ENCODE measurements at regions of chr19 and their contacts with region 1.

Region 1: GRCh38 chr19:14073261-14073924 is 807 bp downstream of the MISP3 start:
- DNase-seq: peak; percentile 93
- ATAC-seq: peak; percentile 77
- H3K4me3 Mint-ChIP-seq: peak overlapping the region; percentile 96
- H3K27ac Mint-ChIP-seq: peak overlapping the region; percentile 81
- H3K4me1 Mint-ChIP-seq: peaks cover 14% of the 10 kb centered on the region
- H3K27me3 Mint-ChIP-seq: peaks cover 6% of the 10 kb centered on the region

Region 2: GRCh38 chr19:13880059-13881043 is 193.0 kb before region 1 on chr19:
- POLR2A ChIA-PET with region 1: interaction called, 19 read pairs
- DNase-seq: peak; percentile 100
- ATAC-seq: peak; percentile 93
- H3K4me3 Mint-ChIP-seq: peak overlapping the region; percentile 62
- H3K27ac Mint-ChIP-seq: peak overlapping the region; percentile 73
- H3K4me1 Mint-ChIP-seq: peaks cover 31% of the 10 kb centered on the region
- H3K27me3 Mint-ChIP-seq: peaks cover 4% of the 10 kb centered on the region